GM10248 (cell line): ENCODE measurements at regions of chr9 and their contacts with region 1.

Region 1: DNA sequence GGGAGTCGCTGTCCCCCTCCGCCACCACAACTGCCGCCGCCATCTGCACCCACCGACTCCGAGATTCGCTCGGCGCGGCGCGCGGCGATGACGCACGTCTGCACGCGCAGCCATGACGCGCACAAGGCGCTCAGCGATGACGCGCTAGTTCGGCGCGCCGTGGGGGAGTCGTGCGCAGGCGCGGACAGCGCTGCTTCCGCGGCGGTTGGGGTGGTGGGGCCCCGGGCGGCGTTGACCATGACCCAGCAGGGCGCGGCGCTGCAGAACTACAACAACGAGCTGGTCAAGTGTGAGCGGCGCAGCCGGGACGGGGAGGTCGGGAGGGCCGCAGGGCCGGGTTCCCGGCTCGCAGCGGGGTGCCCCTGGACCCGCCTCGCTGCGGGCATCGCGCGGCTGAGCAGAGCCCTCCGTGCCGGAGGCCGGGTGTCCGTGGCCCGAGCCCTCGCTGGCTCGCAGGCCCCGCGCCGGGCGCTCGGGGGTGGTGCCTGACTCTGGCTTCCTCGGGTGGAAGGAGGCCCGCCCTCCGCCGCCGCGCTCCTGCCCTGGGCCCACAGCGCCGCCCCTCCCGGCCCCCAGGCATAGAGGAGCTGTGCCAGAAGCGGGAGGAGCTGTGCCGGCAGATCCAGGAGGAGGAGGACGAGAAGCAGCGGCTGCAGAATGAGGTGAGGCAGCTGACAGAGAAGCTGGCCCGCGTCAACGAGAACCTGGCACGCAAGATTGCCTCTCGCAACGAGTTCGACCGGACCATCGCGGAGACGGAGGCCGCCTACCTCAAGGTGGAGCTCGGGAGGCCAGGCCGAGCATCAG is at the starts of genes ANAPC2 and SSNA1:
- DNase-seq: peak; percentile 97
- CTCF ChIP-seq: peak; percentile 49

Region 2: GRCh38 chr9:136429683-136430590 is 758.8 kb before region 1 on chr9:
- CTCF ChIA-PET with region 1: no interaction called
- POLR2A ChIA-PET with region 1: no interaction called
- DNase-seq: no peak
- CTCF ChIP-seq: no peak

Region 3: DNA sequence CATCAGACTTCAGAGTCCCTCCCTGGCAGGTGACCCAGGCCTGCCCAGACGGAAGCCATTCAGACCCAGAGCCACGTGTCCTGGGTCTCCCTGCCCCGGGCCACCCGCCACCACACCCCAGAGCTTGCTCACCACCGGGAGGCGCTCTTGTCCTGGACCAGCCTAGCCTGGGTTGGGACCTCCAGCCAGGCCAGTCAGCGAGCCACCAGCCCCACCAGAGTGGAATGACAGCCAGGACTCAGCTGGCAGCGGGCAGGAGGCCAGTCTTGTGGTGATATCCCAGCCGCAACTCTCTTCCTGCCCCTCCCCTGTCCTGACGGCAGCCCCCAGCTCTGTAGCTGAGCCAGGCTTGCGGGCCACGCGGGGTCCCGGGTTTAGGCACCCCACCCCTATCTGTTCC is 213.0 kb before region 1 on chr9:
- CTCF ChIA-PET with region 1: no interaction called
- POLR2A ChIA-PET with region 1: no interaction called
- DNase-seq: no peak
- CTCF ChIP-seq: peak; percentile 37

Region 4: DNA sequence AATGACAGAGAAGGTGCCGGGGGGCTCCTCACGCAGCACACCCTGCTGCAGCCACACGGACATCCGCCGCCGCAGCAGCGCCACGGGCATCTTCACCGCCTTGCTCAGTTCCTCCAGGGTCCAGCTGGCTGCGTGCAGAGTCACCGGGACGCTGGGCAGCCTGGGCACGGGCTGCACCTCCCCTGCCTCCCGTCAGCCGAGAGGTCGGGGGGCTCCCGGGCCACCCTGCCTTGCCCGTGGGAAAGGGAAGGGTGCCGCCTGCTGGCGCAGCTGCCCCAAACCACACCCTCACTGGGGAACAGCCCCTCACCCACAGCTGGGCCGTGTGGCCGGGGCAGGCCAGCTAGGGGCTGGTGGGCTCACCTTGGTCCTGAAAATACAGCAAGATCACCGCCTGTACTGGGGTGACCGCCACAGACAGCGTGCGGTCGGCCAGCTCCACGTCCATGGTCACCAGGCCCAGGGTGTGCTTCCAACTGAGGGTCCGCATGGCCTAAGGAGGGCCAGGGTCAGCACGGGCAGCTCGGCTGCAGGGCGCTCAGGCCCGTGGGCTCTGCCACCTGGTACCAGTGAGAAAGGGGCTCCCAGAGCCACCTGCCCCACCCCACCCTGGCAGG is 13.2 kb before region 1 on chr9:
- CTCF ChIA-PET with region 1: interaction called, 19 read pairs
- POLR2A ChIA-PET with region 1: interaction called, 5 read pairs
- DNase-seq: no peak
- CTCF ChIP-seq: peak; percentile 42

Region 5: DNA sequence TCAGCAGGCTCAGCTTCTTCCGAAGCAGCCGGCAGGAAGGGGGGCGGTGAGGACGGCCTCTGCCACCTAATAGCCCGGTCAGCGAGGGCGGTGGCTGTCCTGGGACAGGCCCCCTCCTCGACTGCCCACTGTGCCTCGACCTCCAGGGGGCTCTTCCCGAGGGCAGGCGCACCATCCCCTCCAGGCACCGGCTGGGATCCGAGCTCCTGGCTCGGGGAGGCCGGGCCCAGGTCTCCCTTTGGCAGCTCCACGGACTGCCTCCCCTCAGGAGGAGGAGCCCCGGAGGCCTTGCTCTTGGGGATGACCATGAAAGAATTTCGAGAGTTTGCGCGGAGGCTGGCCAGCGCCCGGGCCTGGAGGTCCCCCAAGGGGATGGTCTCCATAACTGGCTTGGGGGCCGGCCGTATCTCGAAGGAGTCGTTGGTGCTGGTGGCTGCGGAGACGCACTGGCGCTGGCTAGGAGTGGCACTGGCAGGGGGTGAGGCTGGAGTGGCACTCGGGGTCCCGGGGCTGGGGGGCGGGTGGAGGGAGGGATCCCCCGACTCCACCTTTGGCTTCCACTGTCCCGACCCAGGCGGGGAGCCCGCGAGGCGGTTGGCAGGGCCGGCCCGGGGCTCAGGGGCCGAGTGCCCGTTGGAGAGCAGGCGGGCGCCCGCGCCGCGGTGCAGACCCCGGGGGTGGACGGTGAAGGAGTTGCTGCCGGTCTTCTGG is 10.9 kb after region 1 on chr9:
- CTCF ChIA-PET with region 1: interaction called, 18 read pairs
- POLR2A ChIA-PET with region 1: interaction called, 8 read pairs
- DNase-seq: no peak
- CTCF ChIP-seq: no peak

Region 6: GRCh38 chr9:137205126-137206069 is 16.7 kb after region 1 on chr9 and contains the starts of genes NDOR1 and TMEM203:
- CTCF ChIA-PET with region 1: interaction called, 18 read pairs
- POLR2A ChIA-PET with region 1: interaction called, 8 read pairs
- DNase-seq: peak; percentile 96
- CTCF ChIP-seq: no peak

Region 7: DNA sequence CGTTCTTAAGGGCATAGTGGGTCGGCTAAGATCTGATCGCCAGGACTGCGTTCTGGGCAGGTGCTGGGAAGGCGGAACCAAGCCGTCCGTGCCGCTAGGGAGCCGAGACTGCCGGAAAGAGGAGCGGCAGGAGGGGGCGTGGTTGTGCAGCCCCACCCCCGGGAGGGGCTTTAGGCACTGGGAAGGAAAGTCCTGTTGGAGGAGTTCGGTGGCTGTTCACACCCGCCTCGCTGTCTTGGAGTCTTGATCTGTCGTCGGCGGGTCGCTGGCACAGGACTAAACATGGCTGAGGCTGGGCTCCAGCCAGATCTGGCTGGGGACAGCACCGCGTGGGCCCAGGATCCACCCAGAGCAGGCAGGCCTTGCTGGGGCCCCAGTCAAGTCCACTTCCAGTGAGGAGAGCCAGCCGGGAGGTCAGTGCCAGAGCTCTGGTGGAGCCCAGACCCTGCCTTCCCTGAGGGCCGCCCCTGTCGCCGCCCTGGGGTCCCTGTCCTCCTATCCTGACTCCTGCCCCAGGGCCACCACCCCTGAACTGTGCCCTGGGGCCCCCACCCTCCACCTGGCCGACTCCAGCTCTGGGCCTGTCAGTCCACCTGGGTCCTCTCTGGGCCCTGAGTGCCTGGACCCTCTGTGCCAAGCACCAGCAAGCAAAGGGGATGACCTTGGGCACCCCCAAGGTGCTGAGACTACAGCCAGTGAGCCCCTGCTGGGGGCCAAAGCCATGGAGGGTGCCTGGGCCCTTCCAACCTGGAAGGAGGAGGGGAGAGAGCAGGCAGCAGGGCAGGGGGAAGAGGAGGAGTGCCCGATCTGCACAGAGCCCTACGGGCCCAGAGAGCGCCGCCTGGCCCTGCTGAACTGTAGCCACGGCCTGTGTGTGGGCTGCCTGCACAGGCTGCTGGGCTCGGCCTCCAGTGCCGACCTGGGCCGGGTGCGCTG is 28.9 kb after region 1 on chr9:
- CTCF ChIA-PET with region 1: interaction called, 12 read pairs
- POLR2A ChIA-PET with region 1: interaction called, 4 read pairs
- DNase-seq: no peak
- CTCF ChIP-seq: no peak

Region 8: DNA sequence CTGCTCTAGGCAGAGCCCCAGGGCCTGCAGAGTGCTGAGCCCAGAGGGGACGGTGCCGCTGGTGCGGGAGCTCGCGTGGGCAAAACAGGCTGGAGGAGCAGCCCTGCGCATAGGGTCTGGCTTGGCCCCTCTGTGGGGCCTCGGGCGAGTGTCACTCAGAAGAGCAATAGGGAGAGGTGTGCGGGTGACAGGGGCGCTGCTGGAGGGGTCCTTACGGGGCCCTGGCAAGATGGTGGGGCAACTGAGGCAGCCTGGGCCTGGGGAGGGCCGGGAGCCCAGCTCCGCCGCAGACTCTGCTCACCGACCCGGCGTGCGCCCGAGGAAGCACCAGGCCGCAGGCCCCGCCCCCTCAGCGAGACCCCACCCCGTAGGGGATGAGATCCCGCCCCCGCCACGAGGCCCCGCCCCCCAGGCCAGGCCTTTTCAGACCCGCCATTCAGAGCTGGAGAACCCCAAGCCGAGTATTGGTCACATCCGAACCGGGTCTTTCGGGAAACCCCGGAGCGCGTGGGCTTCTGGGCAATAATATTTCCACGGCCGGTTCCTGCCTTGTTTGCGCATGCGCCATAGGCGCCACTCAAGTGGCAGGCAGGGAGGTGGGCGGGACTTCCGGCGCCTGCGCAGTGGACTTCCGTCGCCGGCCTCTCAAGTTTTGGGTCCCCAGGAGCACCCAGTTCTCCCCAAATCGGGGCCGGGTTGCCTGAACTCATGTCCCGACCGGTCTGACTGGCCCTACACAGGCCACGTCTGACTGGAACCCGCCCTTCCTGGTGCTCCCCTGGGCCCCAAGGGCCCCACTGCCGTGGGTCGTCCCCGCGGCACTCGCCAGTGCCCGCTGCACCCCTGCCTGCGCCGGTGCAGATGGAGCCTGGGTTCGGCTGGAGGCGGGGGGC is 34.6 kb after region 1 on chr9:
- CTCF ChIA-PET with region 1: interaction called, 18 read pairs
- POLR2A ChIA-PET with region 1: interaction called, 4 read pairs
- DNase-seq: peak; percentile 98
- CTCF ChIP-seq: no peak

Region 9: DNA sequence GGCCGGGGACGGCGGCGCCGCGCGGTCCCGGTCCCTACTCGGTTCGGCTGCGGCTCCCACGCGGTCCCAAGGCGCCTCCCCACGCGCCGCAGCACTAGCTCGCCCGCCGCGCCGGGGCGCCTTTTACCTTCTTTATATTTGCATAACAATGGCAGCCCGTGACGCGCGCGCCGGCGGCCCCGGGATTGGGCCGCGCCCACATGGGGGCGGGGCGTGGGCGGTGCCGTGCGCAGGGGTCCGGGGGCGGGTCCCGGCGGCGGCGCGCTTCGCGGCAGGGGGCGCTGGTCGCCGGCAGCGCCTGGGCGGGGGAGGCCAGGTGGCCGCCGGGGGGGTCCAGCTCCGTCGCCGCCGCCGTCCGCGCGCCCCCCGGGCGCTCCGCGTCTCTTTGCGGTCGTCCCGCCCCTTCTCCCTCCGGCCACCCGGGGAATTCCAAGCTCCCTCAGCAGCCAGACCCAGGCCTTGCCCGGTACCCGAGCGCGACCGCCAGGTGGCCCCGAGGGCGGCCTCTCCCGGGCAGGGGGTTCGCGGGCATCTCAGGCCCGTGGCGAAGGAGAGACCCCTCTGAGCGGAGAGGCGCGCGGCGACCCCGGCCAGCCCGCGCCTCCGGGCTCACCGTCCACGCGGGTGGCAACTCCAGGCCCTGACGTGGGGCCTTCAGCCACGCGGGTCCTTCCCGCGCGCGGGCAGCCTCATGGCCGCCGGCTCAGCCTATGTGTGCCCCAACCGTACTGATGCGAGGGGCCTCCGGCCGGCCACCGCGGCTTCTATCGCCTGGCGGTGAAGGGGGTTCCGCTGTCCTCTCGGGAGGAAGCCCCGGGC is 113.7 kb after region 1 on chr9 and contains the start of gene NRARP:
- CTCF ChIA-PET with region 1: no interaction called
- POLR2A ChIA-PET with region 1: no interaction called
- DNase-seq: peak; percentile 93
- CTCF ChIP-seq: peak; percentile 46

Region 10: GRCh38 chr9:137370865-137371520 is 182.3 kb after region 1 on chr9:
- CTCF ChIA-PET with region 1: no interaction called
- POLR2A ChIA-PET with region 1: no interaction called
- DNase-seq: no peak
- CTCF ChIP-seq: no peak